PC-3 (cell line): ENCODE measurements at regions of chr4 and their contacts with region 1.

Region 1: DNA sequence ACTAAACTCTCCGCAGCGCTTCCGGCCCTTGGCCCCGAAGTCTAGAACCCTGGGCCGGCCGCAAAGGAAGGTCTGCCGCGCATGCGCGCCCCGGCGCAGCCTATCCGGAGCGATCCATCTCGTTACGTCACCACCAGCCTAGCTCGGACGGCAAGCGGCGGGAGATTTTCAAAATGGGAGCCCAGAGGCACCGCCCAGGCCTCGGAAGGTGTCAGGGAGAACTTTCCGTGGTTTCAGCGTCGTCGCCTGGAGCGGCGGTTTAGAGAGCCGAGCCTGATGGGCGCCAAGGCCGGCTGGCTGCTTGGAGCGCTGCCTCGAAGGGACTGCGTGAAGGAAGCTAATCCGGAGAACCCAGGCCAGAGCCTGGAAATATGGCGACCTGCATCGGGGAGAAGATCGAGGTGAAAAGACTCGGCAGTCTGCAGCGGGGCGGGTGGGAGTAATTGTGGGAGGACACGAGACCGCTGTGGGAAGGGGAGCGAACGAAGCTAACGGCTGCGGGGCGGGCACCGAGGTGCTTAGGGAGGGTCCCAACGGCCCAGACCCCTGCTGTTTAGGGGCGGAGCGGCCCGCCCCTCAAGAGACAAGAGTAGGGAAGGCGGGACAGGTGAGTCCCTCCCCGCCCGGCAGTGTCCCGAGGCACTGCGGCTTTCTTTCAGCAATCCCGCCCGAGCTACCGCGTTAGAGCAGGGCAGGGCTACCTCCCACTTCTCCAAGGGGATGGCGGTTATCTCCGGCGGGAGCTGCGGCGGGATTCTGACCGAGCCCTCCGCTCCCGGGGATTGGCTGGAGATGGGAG is at the start of gene PLK4:
- DNase-seq: peak; percentile 91
- ATAC-seq: peak; percentile 79
- H3K4me3 ChIP-seq: peak within 1 kb of the TSS; percentile 90
- H3K27ac ChIP-seq: peak within 1 kb of the TSS; percentile 80
- H3K4me1 ChIP-seq: peaks cover 28% of the 10 kb centered on the region; the same call in 1 of the 2 replicates
- H3K27me3 ChIP-seq: no peaks in the 10 kb centered on the region
- CTCF ChIP-seq: no peak
- total RNA-seq, gene PLK4: 42.5 and 54.5 TPM in 2 replicates

Region 2: DNA sequence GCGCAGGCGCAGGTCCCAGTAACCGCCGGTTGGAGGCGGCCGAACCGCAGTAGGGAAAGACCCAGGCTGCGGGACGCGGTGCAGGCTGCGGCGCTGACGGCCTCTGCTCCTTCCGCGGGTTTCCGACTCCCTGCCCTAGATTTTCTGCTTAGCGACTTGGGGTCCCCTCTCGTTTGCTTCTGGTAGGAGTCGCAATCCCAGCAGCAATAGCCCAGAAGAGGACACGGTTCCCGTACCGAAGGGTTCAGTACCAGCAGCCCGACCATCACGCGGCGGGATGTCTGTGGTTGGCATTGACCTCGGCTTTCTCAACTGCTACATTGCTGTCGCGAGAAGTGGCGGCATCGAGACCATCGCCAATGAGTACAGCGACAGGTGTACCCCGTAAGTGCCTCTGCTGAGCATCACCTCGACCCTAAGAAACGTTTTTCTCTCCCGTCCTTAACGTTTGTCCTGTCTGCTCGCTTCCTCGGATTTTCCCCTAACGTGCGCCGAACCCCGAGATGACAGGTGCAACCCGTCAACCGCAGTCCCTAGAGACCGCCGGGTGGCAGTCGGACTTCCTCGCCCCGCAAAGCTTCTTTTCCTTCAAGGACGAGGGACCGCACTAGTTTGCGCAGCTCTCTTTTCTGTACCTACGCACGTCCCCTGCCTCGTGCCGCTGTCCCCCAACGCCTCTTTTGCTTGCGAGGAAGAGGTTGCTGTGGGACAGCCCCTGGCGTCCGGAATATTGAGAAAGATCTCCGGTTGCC is 98.5 kb before region 1 on chr4 and contains the start of gene HSPA4L:
- CTCF ChIA-PET with region 1: no interaction called
- POLR2A ChIA-PET with region 1: no interaction called
- intact Hi-C with region 1: loop called (anchors 5 kb)
- DNase-seq: peak; percentile 50
- ATAC-seq: peak; percentile 49
- H3K4me3 ChIP-seq: peak within 1 kb of the TSS; percentile 77
- H3K27ac ChIP-seq: peak within 1 kb of the TSS; percentile 32; the same call in 1 of the 2 replicates
- H3K4me1 ChIP-seq: 0 out of 2 replicates have a peak, but pooled peaks cover 7% of the 10 kb centered on the region
- H3K27me3 ChIP-seq: no peaks in the 10 kb centered on the region
- CTCF ChIP-seq: no peak
- total RNA-seq, gene HSPA4L: 8.7 and 9.2 TPM in 2 replicates

Region 3: GRCh38 chr4:127965062-127965802 is 84.3 kb after region 1 on chr4 and contains the starts of genes ABHD18 and MFSD8:
- CTCF ChIA-PET with region 1: interaction called, 3 read pairs
- POLR2A ChIA-PET with region 1: interaction called, 6 read pairs
- intact Hi-C with region 1: loop called (anchors 5 kb)
- DNase-seq: peak; percentile 98
- ATAC-seq: peak; percentile 96
- H3K4me3 ChIP-seq: peak within 1 kb of the TSS; percentile 95
- H3K27ac ChIP-seq: peak within 1 kb of the TSS; percentile 73
- H3K4me1 ChIP-seq: 0 out of 2 replicates have a peak, but pooled peaks cover 5% of the 10 kb centered on the region
- H3K27me3 ChIP-seq: no peaks in the 10 kb centered on the region
- CTCF ChIP-seq: peak; percentile 46; the same call in 1 of the 2 replicates
- total RNA-seq, gene ABHD18: 3.3 and 6.2 TPM in 2 replicates
- total RNA-seq, gene MFSD8: 12.3 and 12.8 TPM in 2 replicates

Region 4: GRCh38 chr4:127985995-127986394 is 105.0 kb after region 1 on chr4:
- CTCF ChIA-PET with region 1: no interaction called
- POLR2A ChIA-PET with region 1: no interaction called
- intact Hi-C with region 1: loop called (anchors 1 kb)
- DNase-seq: no peak
- ATAC-seq: peak; percentile 62
- H3K4me3 ChIP-seq: no peak overlapping the region
- H3K27ac ChIP-seq: no peak overlapping the region
- H3K4me1 ChIP-seq: no peaks in the 10 kb centered on the region
- H3K27me3 ChIP-seq: no peaks in the 10 kb centered on the region
- CTCF ChIP-seq: peak; percentile 51; the same call in 1 of the 2 replicates

Region 5: DNA sequence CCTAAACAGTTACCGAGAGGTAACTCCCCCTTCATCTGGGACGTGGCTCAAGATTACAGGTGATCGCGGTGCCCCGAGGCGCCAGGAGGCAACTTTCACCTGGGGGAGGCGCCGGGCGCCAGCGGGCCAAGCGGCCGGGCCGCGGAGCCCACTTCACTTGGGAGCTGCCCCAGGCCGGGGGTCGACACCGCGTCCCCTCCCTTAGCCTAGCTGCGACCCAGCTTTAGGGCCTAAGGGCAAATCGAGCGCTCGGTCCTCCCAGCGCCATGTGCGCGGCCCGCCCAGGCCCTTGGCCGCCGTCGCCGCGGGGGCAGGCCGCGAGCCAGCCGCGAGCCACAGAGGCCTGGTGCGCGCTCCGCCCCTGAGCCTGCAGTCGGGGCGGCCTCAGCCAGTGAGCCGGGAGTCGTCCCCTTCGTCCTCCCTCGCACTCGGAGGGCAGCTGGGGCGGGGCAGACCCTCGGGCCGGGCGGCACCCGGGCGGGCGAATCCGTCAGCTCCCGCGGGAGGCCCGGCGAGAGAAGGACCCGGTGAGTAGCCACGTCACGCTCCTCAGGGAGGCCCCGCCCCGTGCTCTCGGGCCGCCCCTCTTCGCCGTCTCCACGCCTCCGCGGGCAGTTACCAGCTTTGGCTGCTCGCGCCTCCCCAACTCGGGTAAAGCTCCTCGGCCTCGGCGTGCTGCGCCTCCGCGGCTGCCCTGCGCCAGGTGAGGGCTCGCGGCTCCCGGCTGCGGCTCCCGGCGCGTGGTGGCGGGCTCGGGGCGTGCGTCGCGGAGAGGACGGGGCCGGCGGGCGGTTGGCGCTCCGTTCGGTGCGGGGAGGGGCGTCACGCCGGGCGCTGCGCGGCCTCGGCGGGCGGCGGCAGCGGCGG is 180.0 kb after region 1 on chr4 and contains the start of gene LARP1B:
- CTCF ChIA-PET with region 1: interaction called, 6 read pairs
- POLR2A ChIA-PET with region 1: no interaction called
- intact Hi-C with region 1: loop called (anchors 5 kb)
- DNase-seq: peak; percentile 90
- ATAC-seq: peak; percentile 83
- H3K4me3 ChIP-seq: peak within 1 kb of the TSS; percentile 92
- H3K27ac ChIP-seq: peak within 1 kb of the TSS; percentile 86
- H3K4me1 ChIP-seq: peaks cover 9% of the 10 kb centered on the region; the same call in 1 of the 2 replicates
- H3K27me3 ChIP-seq: no peaks in the 10 kb centered on the region
- CTCF ChIP-seq: no peak
- total RNA-seq, gene LARP1B: 14.8 and 22.2 TPM in 2 replicates